AG04449 (cell line): ENCODE measurements at regions of chr12 and their contacts with region 1.

Region 1: GRCh38 chr12:123591702-123592481 is 7.5 kb downstream of the TMED2 start:
- DNase-seq: no peak
- H3K4me3 ChIP-seq: no peak overlapping the region
- CTCF ChIP-seq: no peak

Region 2: GRCh38 chr12:123614531-123614930 is 22.6 kb after region 1 on chr12:
- CTCF ChIA-PET with region 1: interaction called, 10 read pairs
- POLR2A ChIA-PET with region 1: no interaction called
- DNase-seq: no peak
- H3K4me3 ChIP-seq: no peak overlapping the region
- CTCF ChIP-seq: no peak